ENCODE measurements at regions of chr7 and their contacts with region 1.

Region 1: DNA sequence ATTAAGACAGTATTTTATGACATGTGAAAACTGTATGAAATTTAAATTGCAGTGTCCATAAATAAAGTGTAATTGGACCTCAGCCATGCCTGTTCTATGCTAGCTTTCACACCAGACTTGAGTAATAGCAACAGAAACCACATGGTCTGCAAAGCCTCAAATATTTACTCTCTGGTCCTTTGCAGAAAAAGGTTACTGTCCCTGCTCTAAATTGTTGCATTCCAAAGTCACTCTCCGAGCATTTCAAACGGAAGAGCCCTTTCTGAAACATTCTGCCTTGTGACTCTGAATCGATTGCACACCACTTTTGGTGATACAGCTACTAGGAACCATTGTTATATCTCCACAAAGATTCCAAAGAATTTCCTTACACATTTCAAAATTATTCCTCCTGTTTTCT is 81.0 kb upstream of the STK17A start:
- DNase-seq: no peak
- ATAC-seq: peak; percentile 61
- H3K4me3 ChIP-seq: no peak overlapping the region
- H3K27ac ChIP-seq: no peak overlapping the region
- H3K4me1 ChIP-seq: no peaks in the 10 kb centered on the region
- H3K27me3 ChIP-seq: no peaks in the 10 kb centered on the region
- CTCF ChIP-seq: no peak
- EP300 ChIP-seq: no peak
- POLR2A ChIP-seq: no peak
- RAD21 ChIP-seq: no peak

Region 2: GRCh38 chr7:43199371-43200160 is 302.3 kb before region 1 on chr7:
- CTCF ChIA-PET with region 1: no interaction called
- POLR2A ChIA-PET with region 1: no interaction called
- RAD21 ChIA-PET with region 1: no interaction called
- SMC1A ChIA-PET with region 1: no interaction called
- in situ Hi-C with region 1: no loop called
- intact Hi-C with region 1: no loop called
- DNase-seq: no peak
- ATAC-seq: no peak
- H3K4me3 ChIP-seq: no peak overlapping the region
- H3K27ac ChIP-seq: no peak overlapping the region
- H3K4me1 ChIP-seq: no peaks in the 10 kb centered on the region
- H3K27me3 ChIP-seq: no peaks in the 10 kb centered on the region; a peak in 1 of 4 replicates
- CTCF ChIP-seq: no peak
- EP300 ChIP-seq: no peak
- POLR2A ChIP-seq: no peak
- RAD21 ChIP-seq: no peak

Region 3: GRCh38 chr7:43516581-43517342 is 14.9 kb after region 1 on chr7:
- CTCF ChIA-PET with region 1: interaction called, 3 read pairs
- POLR2A ChIA-PET with region 1: no interaction called
- RAD21 ChIA-PET with region 1: no interaction called
- SMC1A ChIA-PET with region 1: interaction called, 12 read pairs
- in situ Hi-C with region 1: no loop called
- intact Hi-C with region 1: no loop called
- DNase-seq: peak; percentile 48
- ATAC-seq: peak; percentile 94
- H3K4me3 ChIP-seq: no peak overlapping the region
- H3K27ac ChIP-seq: no peak overlapping the region
- H3K4me1 ChIP-seq: peaks cover 3% of the 10 kb centered on the region
- H3K27me3 ChIP-seq: no peaks in the 10 kb centered on the region
- CTCF ChIP-seq: no peak
- EP300 ChIP-seq: peak; percentile 85 to 90; a peak in 3 of 4 replicates
- POLR2A ChIP-seq: no peak
- RAD21 ChIP-seq: no peak